ENCODE measurements at regions of chr1 and their contacts with region 1.

Region 1: GRCh38 chr1:212608209-212608955 is at the start of gene ATF3:
- H3K4me3 ChIP-seq: peak within 1 kb of the TSS; percentile 82
- H3K27ac ChIP-seq: peak within 1 kb of the TSS; percentile 78
- H3K4me1 ChIP-seq: peaks cover 14% of the 10 kb centered on the region
- CTCF ChIP-seq: peak; percentile 15; the same call in 1 of the 2 replicates

Region 2: DNA sequence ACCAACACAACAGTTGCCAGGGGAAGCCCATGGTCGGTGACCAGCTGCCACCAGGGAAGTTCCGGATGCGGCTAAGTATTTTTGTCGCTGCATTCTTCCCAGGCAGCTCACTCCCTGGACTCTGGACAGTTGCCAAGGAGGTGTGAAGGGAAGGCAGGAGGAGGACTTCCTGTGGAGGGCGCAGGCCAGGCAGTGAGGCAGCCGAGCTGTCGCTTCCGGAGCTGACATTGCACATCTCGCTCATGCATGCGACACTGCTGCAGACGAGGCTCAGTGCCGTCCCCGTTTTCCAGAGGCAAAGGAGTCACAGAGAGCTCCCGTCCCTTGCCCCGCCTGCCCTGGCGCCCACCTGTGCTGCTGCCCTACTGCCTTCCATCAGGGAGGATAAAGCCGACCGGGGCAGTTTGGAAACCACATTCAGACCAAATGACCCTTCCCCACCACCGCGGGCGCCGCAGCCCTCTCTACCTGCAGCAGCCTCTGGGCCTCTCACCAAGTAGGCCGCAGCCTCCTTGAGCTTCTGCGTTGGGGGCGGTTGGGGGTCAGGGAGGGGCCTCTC is 94.2 kb before region 1 on chr1:
- CTCF ChIA-PET with region 1: interaction called, 4 read pairs
- POLR2A ChIA-PET with region 1: interaction called, 25 read pairs
- H3K4me3 ChIP-seq: no peak overlapping the region
- H3K27ac ChIP-seq: no peak overlapping the region
- H3K4me1 ChIP-seq: no peaks in the 10 kb centered on the region
- CTCF ChIP-seq: no peak

Region 3: DNA sequence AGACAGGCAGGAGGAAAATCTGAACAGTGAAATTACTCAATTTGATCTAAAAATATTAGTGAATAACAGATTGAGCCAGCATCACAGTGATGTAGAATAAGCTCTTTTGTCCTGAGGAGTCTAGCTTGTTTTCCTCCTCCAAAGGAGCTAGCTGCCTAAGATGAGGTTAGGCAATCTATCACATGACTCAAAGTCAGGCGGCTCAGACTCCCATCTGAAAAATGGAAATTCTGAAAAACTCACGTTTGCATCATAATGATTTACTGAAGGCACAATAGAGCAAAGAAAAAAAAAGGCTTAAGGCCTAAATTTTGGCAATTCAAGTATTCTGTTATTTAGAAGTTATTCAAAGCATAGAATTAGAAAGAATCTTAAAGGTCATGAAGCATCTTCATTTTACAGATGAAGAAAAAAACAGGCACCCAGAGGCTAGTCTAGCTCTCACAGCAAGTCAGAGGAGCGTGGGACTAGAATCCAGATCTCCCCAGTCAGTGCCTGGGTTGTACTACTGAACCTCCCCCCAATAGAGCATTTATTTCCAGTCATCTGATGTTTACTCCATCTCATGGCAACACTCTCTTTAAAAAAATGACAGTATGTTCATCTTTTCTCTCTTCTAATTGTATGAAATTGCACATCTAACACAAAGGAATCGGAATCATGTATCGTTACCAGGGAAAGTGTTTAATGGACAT is 62.3 kb before region 1 on chr1:
- CTCF ChIA-PET with region 1: no interaction called
- POLR2A ChIA-PET with region 1: no interaction called
- H3K4me3 ChIP-seq: no peak overlapping the region
- H3K27ac ChIP-seq: no peak overlapping the region
- H3K4me1 ChIP-seq: no peaks in the 10 kb centered on the region
- CTCF ChIP-seq: no peak

Region 4: GRCh38 chr1:212578041-212578440 is 30.3 kb before region 1 on chr1:
- CTCF ChIA-PET with region 1: interaction called, 3 read pairs
- POLR2A ChIA-PET with region 1: interaction called, 10 read pairs
- H3K4me3 ChIP-seq: no peak overlapping the region
- H3K27ac ChIP-seq: no peak overlapping the region
- H3K4me1 ChIP-seq: no peaks in the 10 kb centered on the region
- CTCF ChIP-seq: no peak

Region 5: GRCh38 chr1:212621951-212622305 is 13.5 kb after region 1 on chr1:
- CTCF ChIA-PET with region 1: interaction called, 3 read pairs
- POLR2A ChIA-PET with region 1: interaction called, 25 read pairs
- H3K4me3 ChIP-seq: no peak overlapping the region
- H3K27ac ChIP-seq: no peak overlapping the region
- H3K4me1 ChIP-seq: no peaks in the 10 kb centered on the region
- CTCF ChIP-seq: no peak

Region 6: GRCh38 chr1:212649020-212649419 is 40.6 kb after region 1 on chr1:
- CTCF ChIA-PET with region 1: no interaction called
- POLR2A ChIA-PET with region 1: no interaction called
- H3K4me3 ChIP-seq: no peak overlapping the region
- H3K27ac ChIP-seq: no peak overlapping the region
- H3K4me1 ChIP-seq: no peaks in the 10 kb centered on the region
- CTCF ChIP-seq: no peak

Region 7: GRCh38 chr1:212700892-212701819 is 92.8 kb after region 1 on chr1:
- CTCF ChIA-PET with region 1: no interaction called
- POLR2A ChIA-PET with region 1: interaction called, 14 read pairs
- H3K4me3 ChIP-seq: peak overlapping the region; percentile 47
- H3K27ac ChIP-seq: peak overlapping the region; percentile 63; the same call in 1 of the 2 replicates
- H3K4me1 ChIP-seq: peaks cover 8% of the 10 kb centered on the region
- CTCF ChIP-seq: peak; percentile 63; the same call in 1 of the 2 replicates